Caco-2 (cell line): ENCODE measurements at regions of chr12 and their contacts with region 1.

Region 1: GRCh38 chr12:99253068-99253467 is 394.5 kb upstream of the GARIN6 start:
- DNase-seq: peak in 1 of 2 experiments; percentile 12
- H3K4me3 ChIP-seq: no peak overlapping the region
- H3K4me3 Mint-ChIP-seq: no peak overlapping the region
- H3K27ac Mint-ChIP-seq: no peak overlapping the region
- H3K4me1 ChIP-seq: no peaks in the 10 kb centered on the region
- H3K4me1 Mint-ChIP-seq: no peaks in the 10 kb centered on the region
- H3K27me3 ChIP-seq: no peaks in the 10 kb centered on the region
- H3K27me3 Mint-ChIP-seq: peaks cover 3% of the 10 kb centered on the region
- CTCF ChIP-seq: peak in 1 of 2 experiments; percentile 49

Region 2: GRCh38 chr12:99043319-99043914 is 209.7 kb before region 1 on chr12:
- CTCF ChIA-PET with region 1: no interaction called
- POLR2A ChIA-PET with region 1: no interaction called
- intact Hi-C with region 1: loop called (anchors 10 kb)
- DNase-seq: peak; percentile 53 to 66
- H3K4me3 ChIP-seq: no peak overlapping the region
- H3K4me3 Mint-ChIP-seq: no peak overlapping the region
- H3K27ac Mint-ChIP-seq: no peak overlapping the region
- H3K4me1 ChIP-seq: no peaks in the 10 kb centered on the region
- H3K4me1 Mint-ChIP-seq: no peaks in the 10 kb centered on the region
- H3K27me3 ChIP-seq: no peaks in the 10 kb centered on the region
- H3K27me3 Mint-ChIP-seq: peaks cover 11% of the 10 kb centered on the region
- CTCF ChIP-seq: peak; percentile 86 to 89

Region 3: GRCh38 chr12:99658671-99659349 is 405.7 kb after region 1 on chr12:
- CTCF ChIA-PET with region 1: no interaction called
- POLR2A ChIA-PET with region 1: no interaction called
- intact Hi-C with region 1: loop called (anchors 5 kb)
- DNase-seq: no peak
- H3K4me3 ChIP-seq: no peak overlapping the region
- H3K4me3 Mint-ChIP-seq: no peak overlapping the region
- H3K27ac Mint-ChIP-seq: no peak overlapping the region
- H3K4me1 ChIP-seq: no peaks in the 10 kb centered on the region
- H3K4me1 Mint-ChIP-seq: no peaks in the 10 kb centered on the region
- H3K27me3 ChIP-seq: no peaks in the 10 kb centered on the region
- H3K27me3 Mint-ChIP-seq: peaks cover 5% of the 10 kb centered on the region
- CTCF ChIP-seq: peak; percentile 5 to 16

Region 4: GRCh38 chr12:99767809-99768208 is 514.7 kb after region 1 on chr12:
- CTCF ChIA-PET with region 1: no interaction called
- POLR2A ChIA-PET with region 1: no interaction called
- intact Hi-C with region 1: loop called (anchors 5 kb)
- DNase-seq: no peak
- H3K4me3 ChIP-seq: no peak overlapping the region
- H3K4me3 Mint-ChIP-seq: no peak overlapping the region
- H3K27ac Mint-ChIP-seq: no peak overlapping the region
- H3K4me1 ChIP-seq: no peaks in the 10 kb centered on the region
- H3K4me1 Mint-ChIP-seq: no peaks in the 10 kb centered on the region
- H3K27me3 ChIP-seq: no peaks in the 10 kb centered on the region
- H3K27me3 Mint-ChIP-seq: peaks cover 8% of the 10 kb centered on the region
- CTCF ChIP-seq: peak; percentile 49 to 51